Mammary epithelial cell (primary cell): ENCODE measurements at regions of chr7 and their contacts with region 1.

Region 1: GRCh38 chr7:55280031-55280454 is 85.1 kb upstream of the LANCL2 start:
- DNase-seq: peak; percentile 44
- H3K4me3 ChIP-seq: no peak overlapping the region
- H3K27ac ChIP-seq: no peak overlapping the region
- H3K4me1 ChIP-seq: no peaks in the 10 kb centered on the region
- H3K27me3 ChIP-seq: no peaks in the 10 kb centered on the region
- CTCF ChIP-seq: peak; percentile 56 to 70

Region 2: DNA sequence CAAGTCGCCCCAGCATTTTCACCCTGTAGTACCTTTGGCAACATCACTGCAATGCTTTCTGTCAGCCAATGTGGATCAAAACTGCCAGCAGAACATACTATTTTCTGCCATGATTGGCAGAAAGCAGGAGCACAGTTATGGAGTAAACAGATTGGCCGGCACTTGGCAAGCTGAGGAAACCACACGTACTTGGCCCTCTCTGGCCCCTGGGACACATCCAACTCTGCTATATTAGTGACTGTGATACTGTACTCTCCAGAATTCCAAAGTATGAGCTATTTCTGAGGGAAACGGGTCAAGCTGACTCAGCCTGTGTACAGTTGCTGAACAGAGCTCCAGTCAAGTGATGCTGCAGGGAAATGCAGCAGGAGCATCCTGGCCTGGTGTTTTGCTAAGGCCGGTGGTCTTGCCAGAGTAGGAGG is 45.3 kb after region 1 on chr7:
- CTCF ChIA-PET with region 1: no interaction called
- dilution Hi-C with region 1: no loop called
- in situ Hi-C with region 1: no loop called
- intact Hi-C with region 1: loop called (anchors 1 kb)
- DNase-seq: peak; percentile 44
- H3K4me3 ChIP-seq: no peak overlapping the region
- H3K27ac ChIP-seq: no peak overlapping the region
- H3K4me1 ChIP-seq: no peaks in the 10 kb centered on the region
- H3K27me3 ChIP-seq: peaks cover 1% of the 10 kb centered on the region
- CTCF ChIP-seq: no peak

Region 3: DNA sequence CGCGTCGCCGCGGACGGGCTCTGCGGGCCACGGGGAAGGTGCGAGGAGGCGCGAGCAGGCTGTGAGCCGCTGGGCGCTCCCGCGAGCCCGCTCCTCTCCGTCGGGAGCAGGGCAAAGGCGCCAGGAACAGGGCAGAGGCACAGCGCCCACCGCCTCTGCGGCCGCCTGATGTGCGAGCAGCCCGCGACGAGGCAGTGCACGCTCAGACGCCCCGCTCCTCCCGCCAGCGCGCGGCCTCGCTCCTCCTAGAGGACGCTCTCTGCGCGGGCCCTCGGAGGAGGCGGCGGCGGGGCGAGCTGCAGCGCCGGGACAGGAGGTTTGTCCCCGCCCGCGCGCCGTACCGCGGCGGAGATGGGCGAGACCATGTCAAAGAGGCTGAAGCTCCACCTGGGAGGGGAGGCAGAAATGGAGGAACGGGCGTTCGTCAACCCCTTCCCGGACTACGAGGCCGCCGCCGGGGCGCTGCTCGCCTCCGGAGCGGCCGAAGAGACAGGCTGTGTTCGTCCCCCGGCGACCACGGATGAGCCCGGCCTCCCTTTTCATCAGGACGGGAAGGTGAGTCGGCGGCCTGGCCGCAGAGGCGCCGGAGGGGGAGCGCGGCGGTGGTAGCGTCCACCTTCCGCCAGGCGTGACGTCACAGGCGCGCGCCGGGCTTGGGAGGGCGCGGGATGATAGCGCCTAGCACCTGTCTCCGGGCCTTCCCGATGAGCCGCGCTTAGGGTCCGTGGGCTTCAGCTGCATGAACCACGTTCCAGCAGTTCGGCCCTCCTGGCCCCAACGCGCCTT is 85.8 kb after region 1 on chr7:
- CTCF ChIA-PET with region 1: no interaction called
- dilution Hi-C with region 1: no loop called
- in situ Hi-C with region 1: no loop called
- intact Hi-C with region 1: loop called (anchors 2 kb)
- DNase-seq: peak; percentile 96
- H3K4me3 ChIP-seq: peak overlapping the region; percentile 65 to 97 (median 77)
- H3K27ac ChIP-seq: peak overlapping the region; percentile 94
- H3K4me1 ChIP-seq: peaks cover 17% of the 10 kb centered on the region
- H3K27me3 ChIP-seq: no peaks in the 10 kb centered on the region
- CTCF ChIP-seq: peak in 1 of 2 donors; percentile 44

Region 4: GRCh38 chr7:55409482-55410225 is 129.6 kb after region 1 on chr7:
- CTCF ChIA-PET with region 1: no interaction called
- dilution Hi-C with region 1: no loop called
- in situ Hi-C with region 1: loop called in 1 of 2 experiments (anchors 5 kb)
- intact Hi-C with region 1: no loop called
- DNase-seq: no peak
- H3K4me3 ChIP-seq: no peak overlapping the region
- H3K27ac ChIP-seq: no peak overlapping the region
- H3K4me1 ChIP-seq: no peaks in the 10 kb centered on the region
- H3K27me3 ChIP-seq: no peaks in the 10 kb centered on the region
- CTCF ChIP-seq: peak; percentile 12 to 14

Region 5: GRCh38 chr7:55415173-55415778 is 135.2 kb after region 1 on chr7:
- CTCF ChIA-PET with region 1: no interaction called
- dilution Hi-C with region 1: no loop called
- in situ Hi-C with region 1: loop called (anchors 5 kb)
- intact Hi-C with region 1: loop called (anchors 1 kb)
- DNase-seq: peak; percentile 57
- H3K4me3 ChIP-seq: no peak overlapping the region
- H3K27ac ChIP-seq: no peak overlapping the region
- H3K4me1 ChIP-seq: no peaks in the 10 kb centered on the region
- H3K27me3 ChIP-seq: no peaks in the 10 kb centered on the region
- CTCF ChIP-seq: peak; percentile 63 to 79

Region 6: DNA sequence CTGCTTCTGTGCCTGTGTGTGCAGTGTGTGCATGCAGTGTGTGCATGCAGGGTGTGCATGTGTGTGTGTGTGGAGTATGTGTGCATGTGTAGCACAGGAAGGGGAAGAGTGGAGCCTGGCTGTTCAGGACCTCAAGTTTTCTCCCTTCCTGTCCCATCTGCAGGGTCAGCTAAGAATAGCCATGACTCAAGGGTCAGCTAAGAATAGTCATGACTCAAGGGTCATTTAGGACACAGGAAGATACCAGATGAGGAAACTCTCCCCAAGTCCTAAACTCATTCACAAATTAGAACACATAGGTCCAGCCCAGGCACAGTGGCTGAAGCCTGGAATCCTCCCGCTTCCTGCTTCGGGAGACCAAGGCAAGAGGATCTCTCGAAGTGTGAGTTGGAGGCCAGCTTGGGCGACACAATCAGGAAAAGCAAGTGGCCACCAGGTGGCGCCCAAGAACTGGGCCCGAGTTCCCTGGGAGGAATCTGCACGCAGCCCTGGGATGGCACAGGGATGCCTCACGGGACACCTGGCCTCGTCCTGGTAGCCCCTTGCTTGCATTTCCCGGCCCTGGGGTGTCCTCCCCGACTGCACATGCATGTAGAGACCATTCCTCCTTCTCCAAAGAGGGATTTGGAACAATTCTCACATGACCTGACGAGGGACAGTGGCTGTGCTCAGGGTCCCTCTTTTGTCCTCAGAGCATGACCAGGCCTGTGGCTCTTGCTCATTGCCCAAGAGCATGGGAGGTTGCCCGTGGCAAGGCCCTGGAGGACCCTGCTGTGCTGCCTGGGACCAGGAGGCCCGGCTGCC is 313.7 kb after region 1 on chr7:
- CTCF ChIA-PET with region 1: no interaction called
- dilution Hi-C with region 1: no loop called
- in situ Hi-C with region 1: loop called in 1 of 2 experiments (anchors 25 kb)
- intact Hi-C with region 1: loop called (anchors 1 kb)
- DNase-seq: peak; percentile 51
- H3K4me3 ChIP-seq: no peak overlapping the region
- H3K27ac ChIP-seq: no peak overlapping the region
- H3K4me1 ChIP-seq: no peaks in the 10 kb centered on the region
- H3K27me3 ChIP-seq: no peaks in the 10 kb centered on the region
- CTCF ChIP-seq: peak; percentile 68 to 95

Region 7: GRCh38 chr7:56074371-56074791 is 794.3 kb after region 1 on chr7:
- CTCF ChIA-PET with region 1: no interaction called
- dilution Hi-C with region 1: no loop called
- in situ Hi-C with region 1: no loop called
- intact Hi-C with region 1: loop called (anchors 5 kb)
- DNase-seq: peak; percentile 74
- H3K4me3 ChIP-seq: no peak overlapping the region
- H3K27ac ChIP-seq: no peak overlapping the region
- H3K4me1 ChIP-seq: peaks cover 3% of the 10 kb centered on the region
- H3K27me3 ChIP-seq: no peaks in the 10 kb centered on the region
- CTCF ChIP-seq: peak; percentile 84 to 94